Activated naive CD8-positive, alpha-beta T cell treated with anti-CD3 and anti-CD28 coated beads, Interleukin-2, amount 10 ng/mL, durations not matched to agents 7 days and 5 days (primary cell): ENCODE measurements at regions of chr6 and their contacts with region 1.

Region 1: GRCh38 chr6:42390228-42390934 is 61.3 kb downstream of the TRERF1 start:
- DNase-seq: peak; percentile 55
- ATAC-seq: peak; percentile 87
- H3K4me3 Mint-ChIP-seq: peak overlapping the region; percentile 79
- H3K27ac Mint-ChIP-seq: peak overlapping the region; percentile 96
- H3K4me1 Mint-ChIP-seq: peaks cover 73% of the 10 kb centered on the region
- H3K27me3 Mint-ChIP-seq: no peaks in the 10 kb centered on the region

Region 2: DNA sequence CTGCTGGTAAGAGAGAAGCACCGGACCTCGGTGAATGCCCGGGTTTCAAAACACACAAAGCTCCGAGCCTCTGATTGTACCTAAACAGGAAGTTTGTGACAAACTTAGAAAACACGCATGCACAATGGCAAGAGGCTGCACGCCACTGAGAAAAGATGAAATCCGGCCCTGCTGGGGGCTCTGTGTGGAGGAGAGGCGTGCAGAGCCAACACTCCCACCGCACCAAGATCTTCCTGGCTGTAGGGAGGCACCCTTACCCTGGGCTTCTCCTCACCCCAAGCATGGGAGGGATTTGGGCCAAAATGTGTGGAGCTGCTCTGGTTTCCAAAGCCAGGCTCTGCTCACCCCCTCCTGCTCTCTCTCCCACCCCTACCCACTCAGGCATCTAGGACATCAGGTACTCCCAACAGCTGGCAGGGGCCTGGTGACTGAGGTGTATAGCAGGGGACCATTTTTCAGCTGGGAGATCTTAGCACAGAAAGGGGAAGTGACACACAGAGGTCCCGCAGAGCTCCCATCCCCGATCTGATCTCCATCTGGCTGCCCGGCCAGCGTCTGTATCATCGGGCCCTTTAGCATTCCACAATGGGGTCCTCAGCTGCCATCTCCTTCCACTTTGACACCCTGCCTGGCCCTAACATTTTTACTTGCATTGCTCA is 22.9 kb before region 1 on chr6:
- POLR2A ChIA-PET with region 1: interaction called, 23 read pairs
- DNase-seq: peak; percentile 43
- ATAC-seq: peak; percentile 43
- H3K4me3 Mint-ChIP-seq: peak overlapping the region; percentile 77
- H3K27ac Mint-ChIP-seq: peak overlapping the region; percentile 81
- H3K4me1 Mint-ChIP-seq: peaks cover 55% of the 10 kb centered on the region
- H3K27me3 Mint-ChIP-seq: no peaks in the 10 kb centered on the region

Region 3: GRCh38 chr6:42378125-42378524 is 12.3 kb before region 1 on chr6:
- POLR2A ChIA-PET with region 1: interaction called, 16 read pairs
- DNase-seq: no peak
- ATAC-seq: peak; percentile 87
- H3K4me3 Mint-ChIP-seq: peak overlapping the region; percentile 70
- H3K27ac Mint-ChIP-seq: peak overlapping the region; percentile 85
- H3K4me1 Mint-ChIP-seq: peaks cover 48% of the 10 kb centered on the region
- H3K27me3 Mint-ChIP-seq: no peaks in the 10 kb centered on the region

Region 4: GRCh38 chr6:42402184-42402583 is 11.8 kb after region 1 on chr6:
- POLR2A ChIA-PET with region 1: interaction called, 35 read pairs
- DNase-seq: no peak
- ATAC-seq: peak; percentile 86
- H3K4me3 Mint-ChIP-seq: peak overlapping the region; percentile 56
- H3K27ac Mint-ChIP-seq: peak overlapping the region; percentile 39
- H3K4me1 Mint-ChIP-seq: peaks cover 45% of the 10 kb centered on the region
- H3K27me3 Mint-ChIP-seq: no peaks in the 10 kb centered on the region

Region 5: GRCh38 chr6:42423244-42423643 is 32.9 kb after region 1 on chr6:
- POLR2A ChIA-PET with region 1: interaction called, 10 read pairs
- DNase-seq: no peak
- ATAC-seq: peak; percentile 72
- H3K4me3 Mint-ChIP-seq: peak overlapping the region; percentile 73
- H3K27ac Mint-ChIP-seq: peak overlapping the region; percentile 68
- H3K4me1 Mint-ChIP-seq: peaks cover 50% of the 10 kb centered on the region
- H3K27me3 Mint-ChIP-seq: peaks cover 2% of the 10 kb centered on the region

Region 6: GRCh38 chr6:42453031-42453653 is 62.8 kb after region 1 on chr6:
- POLR2A ChIA-PET with region 1: interaction called, 34 read pairs
- DNase-seq: peak; percentile 81
- ATAC-seq: peak; percentile 81
- H3K4me3 Mint-ChIP-seq: peak overlapping the region; percentile 100
- H3K27ac Mint-ChIP-seq: no peak overlapping the region
- H3K4me1 Mint-ChIP-seq: peaks cover 29% of the 10 kb centered on the region
- H3K27me3 Mint-ChIP-seq: peaks cover 14% of the 10 kb centered on the region